ENCODE measurements at regions of chr11 and their contacts with region 1.

Region 1: GRCh38 chr11:74449369-74449931 is 17.9 kb downstream of the KCNE3 start:
- DNase-seq: peak; percentile 68 to 74
- ATAC-seq: peak; percentile 81 to 94
- H3K4me3 ChIP-seq: no peak overlapping the region
- H3K27ac ChIP-seq: peak overlapping the region; percentile 53 to 60; a peak in 5 of 6 replicates
- H3K4me1 ChIP-seq: peaks cover 12% of the 10 kb centered on the region
- CTCF ChIP-seq: peak; percentile 94
- EP300 ChIP-seq: no peak
- POLR2A ChIP-seq: no peak
- RAD21 ChIP-seq: peak; percentile 96 to 97

Region 2: GRCh38 chr11:73965076-73965860 is 484.2 kb before region 1 on chr11:
- CTCF ChIA-PET with region 1: interaction called, 22 read pairs
- POLR2A ChIA-PET with region 1: no interaction called
- DNase-seq: peak in 1 of 2 experiments; percentile 31
- ATAC-seq: peak; percentile 56 to 66; a peak in 5 of 6 replicates
- H3K4me3 ChIP-seq: peak overlapping the region; percentile 37
- H3K27ac ChIP-seq: peak overlapping the region; percentile 55 to 62; a peak in 5 of 6 replicates
- H3K4me1 ChIP-seq: 0 out of 3 replicates have a peak, but pooled peaks cover 5% of the 10 kb centered on the region
- CTCF ChIP-seq: no peak
- EP300 ChIP-seq: no peak
- POLR2A ChIP-seq: no peak
- RAD21 ChIP-seq: peak in 1 of 2 experiments; percentile 39; a peak in 2 of 5 replicates

Region 3: GRCh38 chr11:74388678-74389327 is 60.6 kb before region 1 on chr11:
- CTCF ChIA-PET with region 1: interaction called, 30 read pairs
- POLR2A ChIA-PET with region 1: interaction called, 5 read pairs
- DNase-seq: peak; percentile 21 to 45
- ATAC-seq: peak; percentile 82 to 87; a peak in 5 of 6 replicates
- H3K4me3 ChIP-seq: no peak overlapping the region
- H3K27ac ChIP-seq: peak overlapping the region; percentile 21 to 67; a peak in 3 of 6 replicates
- H3K4me1 ChIP-seq: peaks cover 49% of the 10 kb centered on the region
- CTCF ChIP-seq: peak; percentile 93
- EP300 ChIP-seq: no peak
- POLR2A ChIP-seq: no peak
- RAD21 ChIP-seq: peak; percentile 70 to 73

Region 4: DNA sequence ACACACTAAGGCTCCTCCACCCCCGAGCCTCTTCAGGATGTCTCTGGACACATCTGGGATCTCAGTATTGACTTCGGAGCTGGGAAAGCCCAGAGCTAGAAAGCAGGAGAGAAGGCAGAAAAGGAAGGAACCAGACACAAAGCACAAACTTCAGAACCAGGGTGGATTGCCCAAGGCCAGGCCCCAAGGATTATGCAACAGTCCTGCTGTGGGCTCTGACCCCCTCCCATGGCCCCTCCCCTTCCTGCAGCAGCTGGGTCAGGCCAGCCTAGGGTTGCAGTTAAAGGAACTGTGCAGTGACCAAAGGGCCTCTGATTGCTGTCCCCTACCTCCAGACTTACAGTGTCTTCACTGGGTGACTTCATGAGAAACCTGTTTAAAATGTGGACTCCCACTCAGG is 12.6 kb after region 1 on chr11:
- CTCF ChIA-PET with region 1: interaction called, 32 read pairs
- POLR2A ChIA-PET with region 1: no interaction called
- DNase-seq: no peak
- ATAC-seq: no peak
- H3K4me3 ChIP-seq: no peak overlapping the region
- H3K27ac ChIP-seq: peak overlapping the region in 1 of 2 experiments; percentile 29; a peak in 3 of 6 replicates
- H3K4me1 ChIP-seq: peaks cover 32% of the 10 kb centered on the region
- CTCF ChIP-seq: no peak
- EP300 ChIP-seq: no peak
- POLR2A ChIP-seq: no peak
- RAD21 ChIP-seq: no peak

Region 5: GRCh38 chr11:74506823-74507222 is 57.4 kb after region 1 on chr11:
- CTCF ChIA-PET with region 1: interaction called, 11 read pairs
- POLR2A ChIA-PET with region 1: no interaction called
- DNase-seq: no peak
- ATAC-seq: no peak
- H3K4me3 ChIP-seq: no peak overlapping the region
- H3K27ac ChIP-seq: no peak overlapping the region
- H3K4me1 ChIP-seq: peaks cover 15% of the 10 kb centered on the region
- CTCF ChIP-seq: no peak
- EP300 ChIP-seq: no peak
- POLR2A ChIP-seq: no peak
- RAD21 ChIP-seq: no peak

Region 6: GRCh38 chr11:74570266-74571061 is 121.0 kb after region 1 on chr11:
- CTCF ChIA-PET with region 1: interaction called, 387 read pairs
- POLR2A ChIA-PET with region 1: interaction called, 4 read pairs
- DNase-seq: peak; percentile 70 to 83
- ATAC-seq: peak; percentile 93 to 97
- H3K4me3 ChIP-seq: no peak overlapping the region
- H3K27ac ChIP-seq: no peak overlapping the region
- H3K4me1 ChIP-seq: peaks cover 12% of the 10 kb centered on the region; the same call in 1 of the 3 replicates
- CTCF ChIP-seq: peak; percentile 91
- EP300 ChIP-seq: no peak
- POLR2A ChIP-seq: no peak
- RAD21 ChIP-seq: peak; percentile 91 to 95